ENCODE measurements at regions of chr17 and their contacts with region 1.

Region 1: DNA sequence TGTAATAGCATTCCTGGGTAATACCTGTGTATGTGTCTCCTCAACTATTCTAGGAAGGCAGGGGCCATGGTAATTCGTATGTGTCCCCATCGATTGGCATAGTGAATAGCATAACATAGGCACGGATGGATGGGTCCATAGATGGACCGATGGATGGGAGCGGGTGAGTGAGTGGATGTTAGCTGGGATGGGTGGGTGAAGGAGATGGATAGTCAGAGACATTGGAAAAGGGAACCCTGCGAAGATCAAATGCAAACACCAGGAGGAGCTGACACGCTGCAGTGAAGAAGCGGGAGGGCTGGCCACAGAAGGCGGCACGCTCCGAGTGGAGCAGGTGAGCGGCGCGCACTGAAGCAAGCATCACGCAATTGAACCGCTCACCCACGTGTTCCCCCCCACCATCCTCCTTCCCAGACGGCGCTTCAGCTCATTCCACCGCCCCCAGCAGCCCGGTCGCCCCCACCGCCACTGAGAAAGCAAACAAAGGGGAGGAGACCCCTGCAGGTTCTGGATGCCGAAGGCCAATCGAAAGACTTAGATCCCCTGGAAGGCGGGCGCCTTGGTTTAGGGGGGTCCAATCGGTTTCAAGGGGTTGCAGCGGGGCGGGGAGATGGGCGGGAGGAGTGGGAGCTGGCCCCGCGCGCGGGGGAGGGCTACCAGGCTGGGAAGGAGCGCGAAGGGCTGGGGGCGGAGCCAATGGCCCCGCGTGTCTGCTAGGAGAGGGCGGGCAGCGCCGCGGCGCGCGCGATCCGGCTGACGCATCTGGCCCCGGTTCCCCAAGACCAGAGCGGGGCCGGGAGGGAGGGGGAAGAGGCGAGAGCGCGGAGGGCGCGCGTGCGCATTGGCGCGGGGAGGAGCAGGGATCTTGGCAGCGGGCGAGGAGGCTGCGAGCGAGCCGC is at the start of gene ARRB2:
- DNase-seq: peak; percentile 98
- H3K4me3 ChIP-seq: peak within 1 kb of the TSS; percentile 64 to 65
- H3K27ac ChIP-seq: peak within 1 kb of the TSS; percentile 46 to 86
- H3K4me1 ChIP-seq: peaks cover 3% of the 10 kb centered on the region
- H3K27me3 ChIP-seq: no peaks in the 10 kb centered on the region
- CTCF ChIP-seq: peak; percentile 27 to 74 (median 32)
- POLR2A ChIP-seq: no peak
- total RNA-seq, gene ARRB2: 13.5 to 19.5 TPM

Region 2: DNA sequence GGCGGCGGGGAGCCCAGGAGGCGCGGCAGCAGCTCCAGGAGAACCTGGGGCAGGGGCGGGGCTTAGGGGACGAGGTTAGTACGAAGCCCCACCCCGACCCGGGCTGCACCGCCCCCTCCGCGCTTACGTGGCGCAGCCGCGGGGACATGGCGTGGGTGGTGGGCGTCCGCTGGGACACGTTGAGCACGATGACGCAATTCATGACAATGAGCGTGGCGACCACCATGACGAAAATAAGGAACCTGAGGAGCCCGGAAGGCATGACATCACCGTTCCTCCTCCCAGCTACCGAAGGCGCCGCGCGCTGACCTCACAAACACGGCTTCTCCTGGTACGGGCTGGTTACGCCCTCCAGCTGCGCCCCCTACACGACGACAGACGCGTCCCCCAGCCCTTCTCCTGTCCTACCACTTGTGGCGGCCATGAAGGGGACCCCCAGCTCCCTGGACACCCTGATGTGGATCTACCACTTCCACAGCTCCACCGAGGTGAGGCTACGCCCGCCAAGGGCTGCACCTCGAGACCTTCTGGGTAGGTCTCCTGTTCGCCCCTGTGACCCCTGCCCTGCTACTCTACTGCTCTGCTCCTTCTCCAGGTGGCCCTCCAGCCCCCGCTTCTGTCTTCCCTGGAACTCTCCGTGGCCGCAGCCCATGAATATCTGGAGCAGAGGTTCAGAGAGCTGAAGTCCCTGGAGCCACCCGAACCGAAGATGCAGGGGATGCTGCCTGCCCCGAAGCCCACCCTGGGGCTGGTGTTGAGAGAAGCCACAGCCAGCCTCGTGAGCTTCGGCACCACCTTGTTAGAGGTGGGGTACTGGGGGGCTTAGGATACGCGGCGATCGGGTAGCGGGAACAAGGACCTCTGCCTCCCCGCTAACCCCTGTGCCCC is 189.5 kb after region 1 on chr17 and contains the start of gene C17orf107:
- intact Hi-C with region 1: loop called (anchors 10 kb)
- DNase-seq: peak; percentile 76
- H3K4me3 ChIP-seq: peak within 1 kb of the TSS; percentile 36 to 42
- H3K27ac ChIP-seq: no peak within 1 kb of the TSS
- H3K4me1 ChIP-seq: peaks cover 8% of the 10 kb centered on the region
- H3K27me3 ChIP-seq: no peaks in the 10 kb centered on the region
- CTCF ChIP-seq: no peak
- POLR2A ChIP-seq: no peak
- total RNA-seq, gene C17orf107: 2.8 to 4.1 TPM

Measured in testis (tissue), 5 donors.